ENCODE measurements at regions of chr20 and their contacts with region 1.

Region 1: GRCh38 chr20:17822039-17822438 is 122.3 kb downstream of the BANF2 start:
- DNase-seq: no peak
- H3K4me3 ChIP-seq: no peak overlapping the region
- H3K27ac ChIP-seq: no peak overlapping the region
- H3K4me1 ChIP-seq: peaks cover 0 to 5% (median 0%) of the 10 kb centered on the region in 4 donors
- H3K27me3 ChIP-seq: no peaks in the 10 kb centered on the region
- CTCF ChIP-seq: no peak

Region 2: GRCh38 chr20:17759241-17759848 is 62.7 kb before region 1 on chr20:
- intact Hi-C with region 1: loop called (anchors 2 kb)
- DNase-seq: no peak
- H3K4me3 ChIP-seq: no peak overlapping the region
- H3K27ac ChIP-seq: no peak overlapping the region
- H3K4me1 ChIP-seq: no peaks in the 10 kb centered on the region
- H3K27me3 ChIP-seq: no peaks in the 10 kb centered on the region
- CTCF ChIP-seq: no peak